ENCODE measurements at regions of chr5 and their contacts with region 1.

Region 1: DNA sequence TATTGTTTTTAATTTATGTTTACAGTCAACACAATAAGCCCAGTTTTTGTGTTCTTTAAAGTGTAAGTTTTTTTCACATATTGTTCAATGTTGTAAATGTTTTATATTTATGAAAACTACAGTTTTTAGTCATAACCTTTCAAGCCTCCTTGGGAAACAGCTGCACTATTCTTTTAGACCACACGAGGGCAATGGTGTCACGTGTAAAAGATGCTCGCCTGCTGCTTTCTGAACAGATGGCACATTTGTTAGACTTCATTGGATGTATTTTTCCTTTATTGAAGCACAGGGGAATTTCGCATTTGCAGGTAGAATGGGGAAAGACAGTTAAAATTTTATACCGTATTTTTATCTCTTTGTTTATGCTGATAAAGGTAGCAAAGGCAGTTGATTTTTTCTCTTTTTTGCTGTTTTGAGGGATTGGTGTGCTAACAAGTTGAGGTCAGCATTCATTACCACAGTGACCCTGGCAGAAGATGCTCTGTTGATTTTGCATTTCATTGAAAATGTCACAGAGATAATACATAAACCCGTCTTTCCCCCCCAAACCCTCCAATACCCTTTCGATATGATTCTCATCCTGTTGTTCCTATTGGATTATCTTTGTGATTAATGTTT is 59.0 kb downstream of the MAT2B start:
- DNase-seq: peak; percentile 50
- ATAC-seq: no peak
- H3K4me3 ChIP-seq: no peak overlapping the region
- H3K27ac ChIP-seq: no peak overlapping the region
- H3K4me1 ChIP-seq: peaks cover 32% of the 10 kb centered on the region
- H3K27me3 ChIP-seq: peaks cover 0 to 11% of the 10 kb centered on the region in 2 experiments; a peak in 1 of 5 replicates
- CTCF ChIP-seq: peak; percentile 83
- EP300 ChIP-seq: no peak
- POLR2A ChIP-seq: no peak
- RAD21 ChIP-seq: peak; percentile 49; the same call in 1 of the 2 replicates

Region 2: DNA sequence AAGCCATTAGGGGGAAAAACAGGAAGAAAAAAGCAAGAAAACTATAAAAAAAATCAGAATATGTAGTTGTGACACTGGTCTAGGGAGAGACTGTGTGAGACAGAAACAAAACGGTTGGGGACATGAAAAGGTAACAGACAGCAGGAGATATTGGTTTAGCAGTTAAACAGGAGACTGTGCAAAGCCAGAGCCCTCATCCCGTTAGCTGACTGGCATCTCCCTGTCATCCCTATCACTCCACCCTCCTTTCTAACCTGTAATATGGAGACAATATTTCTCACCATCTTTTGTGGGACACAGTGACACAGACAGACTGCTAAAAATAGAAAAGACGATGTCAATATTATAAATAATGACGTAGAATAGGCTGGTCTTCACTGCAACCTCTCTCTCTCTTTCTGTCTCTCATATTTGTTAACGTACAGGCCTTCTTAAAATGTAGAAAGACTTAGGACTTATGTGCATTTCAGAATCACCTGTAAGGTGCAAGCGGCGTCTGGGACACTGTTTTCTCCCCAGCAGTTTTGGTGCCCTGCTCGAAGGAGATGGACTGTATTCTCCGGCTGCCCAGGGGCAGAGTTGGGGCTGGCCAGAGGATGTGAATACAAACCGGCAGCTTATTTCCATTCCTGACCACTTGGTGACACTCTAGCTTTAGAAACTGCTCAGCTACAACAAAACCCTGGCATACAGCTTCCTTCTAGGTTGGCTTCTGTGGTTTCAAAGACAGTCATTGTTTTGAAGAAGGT is 131.6 kb after region 1 on chr5:
- CTCF ChIA-PET with region 1: no interaction called
- POLR2A ChIA-PET with region 1: no interaction called
- in situ Hi-C with region 1: no loop called
- intact Hi-C with region 1: loop called (anchors 5 kb)
- DNase-seq: peak; percentile 38
- ATAC-seq: peak; percentile 100
- H3K4me3 ChIP-seq: no peak overlapping the region
- H3K27ac ChIP-seq: no peak overlapping the region
- H3K4me1 ChIP-seq: no peaks in the 10 kb centered on the region
- H3K27me3 ChIP-seq: no peaks in the 10 kb centered on the region; a peak in 1 of 5 replicates
- CTCF ChIP-seq: peak; percentile 80
- EP300 ChIP-seq: no peak
- POLR2A ChIP-seq: no peak
- RAD21 ChIP-seq: no peak

Region 3: DNA sequence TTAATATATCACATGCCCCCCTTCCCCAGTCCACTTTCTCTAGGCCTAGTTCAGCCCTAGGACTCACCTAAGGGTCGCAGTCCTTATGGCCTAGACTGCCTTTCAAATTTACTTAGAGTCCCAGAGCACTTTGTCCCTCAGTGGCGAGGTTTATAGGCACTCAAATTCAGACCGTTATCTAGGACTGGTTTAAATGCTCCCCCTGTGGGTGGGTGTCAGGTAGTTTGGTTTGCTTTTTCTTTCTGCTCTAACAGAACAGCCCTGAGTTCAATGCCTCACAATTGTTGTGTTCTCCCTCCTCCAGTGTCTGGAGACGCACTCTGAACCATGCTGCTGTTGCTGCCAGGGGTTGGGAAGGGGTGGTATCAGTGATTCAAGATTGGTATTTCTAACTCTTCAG is 258.1 kb after region 1 on chr5:
- CTCF ChIA-PET with region 1: no interaction called
- POLR2A ChIA-PET with region 1: no interaction called
- in situ Hi-C with region 1: no loop called
- intact Hi-C with region 1: loop called (anchors 1 kb)
- DNase-seq: no peak
- ATAC-seq: no peak
- H3K4me3 ChIP-seq: no peak overlapping the region
- H3K27ac ChIP-seq: no peak overlapping the region
- H3K4me1 ChIP-seq: no peaks in the 10 kb centered on the region
- H3K27me3 ChIP-seq: no peaks in the 10 kb centered on the region
- CTCF ChIP-seq: no peak
- EP300 ChIP-seq: no peak
- POLR2A ChIP-seq: no peak
- RAD21 ChIP-seq: no peak

Region 4: DNA sequence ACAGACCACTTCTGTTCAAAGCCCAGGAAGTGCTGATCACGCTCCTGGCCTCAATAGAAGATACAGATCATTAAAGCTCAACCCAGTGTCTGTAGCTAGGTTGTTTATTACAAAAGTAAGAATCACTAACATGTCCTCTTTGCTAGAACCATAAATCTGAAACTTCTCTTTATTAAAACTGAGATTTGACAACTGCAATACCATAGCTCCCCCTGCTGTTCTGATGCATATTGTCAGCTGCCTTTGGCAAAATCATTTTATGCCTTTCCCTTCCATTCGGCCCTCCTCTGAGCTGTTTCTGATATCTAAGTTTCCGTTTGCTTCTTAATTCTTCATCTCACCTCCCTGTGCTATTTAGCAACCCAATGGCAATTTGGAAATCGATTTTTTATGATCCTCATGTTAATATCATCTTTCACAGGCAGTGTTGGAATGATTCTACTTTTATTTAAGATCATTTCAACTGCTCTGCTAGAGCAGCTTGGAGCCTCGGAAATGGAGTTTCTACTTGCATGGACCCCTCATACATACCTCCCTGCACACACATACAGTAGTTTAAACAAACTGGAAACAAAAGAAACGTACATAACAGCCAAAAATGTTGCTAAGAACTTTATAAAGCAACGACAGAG is 939.8 kb after region 1 on chr5:
- CTCF ChIA-PET with region 1: interaction called, 21 read pairs
- POLR2A ChIA-PET with region 1: no interaction called
- in situ Hi-C with region 1: loop called (anchors 5 kb)
- intact Hi-C with region 1: loop called (anchors 1 kb)
- DNase-seq: peak; percentile 34
- ATAC-seq: peak; percentile 47; the same call in 1 of the 3 replicates
- H3K4me3 ChIP-seq: no peak overlapping the region
- H3K27ac ChIP-seq: no peak overlapping the region
- H3K4me1 ChIP-seq: no peaks in the 10 kb centered on the region
- H3K27me3 ChIP-seq: no peaks in the 10 kb centered on the region
- CTCF ChIP-seq: peak; percentile 72
- EP300 ChIP-seq: no peak
- POLR2A ChIP-seq: no peak
- RAD21 ChIP-seq: 0 out of 2 replicates have a peak, but pooled peaks have one; percentile 32

Region 5: GRCh38 chr5:164672931-164673694 is 1108.7 kb after region 1 on chr5:
- CTCF ChIA-PET with region 1: no interaction called
- POLR2A ChIA-PET with region 1: no interaction called
- in situ Hi-C with region 1: no loop called
- intact Hi-C with region 1: loop called (anchors 5 kb)
- DNase-seq: no peak
- ATAC-seq: no peak
- H3K4me3 ChIP-seq: no peak overlapping the region
- H3K27ac ChIP-seq: no peak overlapping the region
- H3K4me1 ChIP-seq: no peaks in the 10 kb centered on the region
- H3K27me3 ChIP-seq: no peaks in the 10 kb centered on the region
- CTCF ChIP-seq: no peak
- EP300 ChIP-seq: no peak
- POLR2A ChIP-seq: no peak
- RAD21 ChIP-seq: no peak

Region 6: GRCh38 chr5:165209086-165209727 is 1644.8 kb after region 1 on chr5:
- CTCF ChIA-PET with region 1: interaction called, 6 read pairs
- POLR2A ChIA-PET with region 1: no interaction called
- in situ Hi-C with region 1: loop called (anchors 25 kb)
- intact Hi-C with region 1: no loop called
- DNase-seq: peak; percentile 3
- ATAC-seq: no peak
- H3K4me3 ChIP-seq: no peak overlapping the region
- H3K27ac ChIP-seq: no peak overlapping the region
- H3K4me1 ChIP-seq: no peaks in the 10 kb centered on the region
- H3K27me3 ChIP-seq: no peaks in the 10 kb centered on the region
- CTCF ChIP-seq: peak; percentile 41
- EP300 ChIP-seq: no peak
- POLR2A ChIP-seq: no peak
- RAD21 ChIP-seq: no peak